ENCODE measurements at regions of chr17 and their contacts with region 1.

Region 1: GRCh38 chr17:35345926-35346771 is 27.3 kb downstream of the SLFN11 start:
- DNase-seq: peak; percentile 52
- ATAC-seq: peak; percentile 60
- H3K4me3 ChIP-seq: peak overlapping the region; percentile 50 to 80 (median 63)
- H3K4me3 Mint-ChIP-seq: peak overlapping the region; percentile 95
- H3K27ac ChIP-seq: peak overlapping the region; percentile 36 to 59
- H3K27ac Mint-ChIP-seq: peak overlapping the region; percentile 83
- H3K4me1 ChIP-seq: peaks cover 24 to 26% of the 10 kb centered on the region in 2 donors
- H3K4me1 Mint-ChIP-seq: peaks cover 39% of the 10 kb centered on the region
- H3K27me3 ChIP-seq: no peaks in the 10 kb centered on the region
- H3K27me3 Mint-ChIP-seq: no peaks in the 10 kb centered on the region
- CTCF ChIP-seq: no peak

Region 2: DNA sequence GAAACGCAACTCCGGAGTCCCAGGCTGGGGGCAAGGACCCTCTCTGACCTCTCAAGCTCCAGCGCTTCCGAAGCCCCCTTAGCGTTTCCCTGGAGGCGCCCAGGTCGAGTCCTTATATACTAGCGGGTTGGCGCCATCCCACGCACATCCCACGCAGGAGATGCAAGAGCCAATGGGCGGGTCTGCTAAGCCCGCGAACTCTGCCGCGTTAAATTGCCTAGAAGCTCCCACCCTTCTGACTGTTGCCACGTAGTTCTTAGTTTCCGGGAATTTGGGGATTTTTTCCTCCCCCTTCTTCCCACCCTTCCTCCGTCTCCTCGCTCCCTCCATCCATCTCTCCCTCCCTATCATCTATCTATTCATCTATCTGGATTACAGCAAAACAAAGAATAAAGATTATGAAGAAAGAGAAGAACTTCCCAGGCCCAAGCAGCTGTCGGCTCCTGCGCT is 27.4 kb after region 1 on chr17 and contains the start of gene SLFN11:
- CTCF ChIA-PET with region 1: interaction called, 4 read pairs
- POLR2A ChIA-PET with region 1: interaction called, 6 read pairs
- intact Hi-C with region 1: loop called (anchors 1 kb)
- DNase-seq: peak; percentile 85
- ATAC-seq: peak; percentile 77
- H3K4me3 ChIP-seq: peak within 1 kb of the TSS; percentile 18 to 87 (median 72)
- H3K4me3 Mint-ChIP-seq: peak within 1 kb of the TSS; percentile 96
- H3K27ac ChIP-seq: peak within 1 kb of the TSS; percentile 79 to 85
- H3K27ac Mint-ChIP-seq: peak within 1 kb of the TSS; percentile 99
- H3K4me1 ChIP-seq: peaks cover 7 to 8% of the 10 kb centered on the region in 2 donors
- H3K4me1 Mint-ChIP-seq: peaks cover 49% of the 10 kb centered on the region
- H3K27me3 ChIP-seq: no peaks in the 10 kb centered on the region
- H3K27me3 Mint-ChIP-seq: no peaks in the 10 kb centered on the region
- CTCF ChIP-seq: no peak
- total RNA-seq, gene SLFN11: 48.1 and 52.2 TPM in 2 replicates